PC-9 (cell line): ENCODE measurements at regions of chr4 and their contacts with region 1.

Region 1: GRCh38 chr4:158873795-158874401 is 105.1 kb downstream of the FNIP2 start:
- DNase-seq: peak; percentile 61 to 98
- H3K4me3 ChIP-seq: peak overlapping the region; percentile 26; the same call in 1 of the 2 replicates
- H3K27ac ChIP-seq: peak overlapping the region; percentile 83
- H3K4me1 ChIP-seq: peaks cover 22% of the 10 kb centered on the region
- H3K27me3 ChIP-seq: no peaks in the 10 kb centered on the region
- CTCF ChIP-seq: no peak

Region 2: GRCh38 chr4:159141193-159141592 is 267.3 kb after region 1 on chr4:
- CTCF ChIA-PET with region 1: no interaction called
- POLR2A ChIA-PET with region 1: interaction called, 16 read pairs
- intact Hi-C with region 1: no loop called
- DNase-seq: no peak
- H3K4me3 ChIP-seq: no peak overlapping the region
- H3K27ac ChIP-seq: no peak overlapping the region
- H3K4me1 ChIP-seq: peaks cover 9% of the 10 kb centered on the region
- H3K27me3 ChIP-seq: no peaks in the 10 kb centered on the region
- CTCF ChIP-seq: no peak

Region 3: DNA sequence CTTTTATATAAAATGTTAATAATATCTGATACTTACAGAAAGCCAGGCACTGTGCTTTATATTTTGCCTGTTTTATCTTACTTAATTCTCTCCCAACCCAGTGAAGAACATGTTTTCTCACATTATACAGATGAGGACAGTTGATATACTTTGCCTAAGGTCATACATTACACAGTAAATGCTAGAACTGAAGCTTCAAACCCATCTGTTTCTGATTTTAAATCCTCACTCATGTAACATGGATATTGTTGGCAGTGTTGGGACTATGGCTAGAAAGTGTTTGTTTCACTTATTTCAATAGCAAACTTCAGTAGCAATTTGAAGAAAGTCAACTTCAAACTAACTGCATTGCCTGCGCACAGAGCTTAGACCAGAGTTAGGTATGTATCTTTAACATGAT is 286.3 kb after region 1 on chr4:
- CTCF ChIA-PET with region 1: no interaction called
- POLR2A ChIA-PET with region 1: no interaction called
- intact Hi-C with region 1: no loop called
- DNase-seq: no peak
- H3K4me3 ChIP-seq: no peak overlapping the region
- H3K27ac ChIP-seq: no peak overlapping the region
- H3K4me1 ChIP-seq: no peaks in the 10 kb centered on the region
- H3K27me3 ChIP-seq: no peaks in the 10 kb centered on the region
- CTCF ChIP-seq: no peak